Gastrocnemius medialis (tissue), 4 donors: ENCODE measurements at regions of chr5 and their contacts with region 1.

Region 1: GRCh38 chr5:62354028-62354874 is 48.2 kb downstream of the KIF2A start:
- DNase-seq: no peak
- ATAC-seq: peak; percentile 56 to 86
- H3K4me3 ChIP-seq: no peak overlapping the region
- H3K27ac ChIP-seq: no peak overlapping the region
- H3K4me1 ChIP-seq: peaks cover 0 to 3% of the 10 kb centered on the region in 2 donors
- H3K27me3 ChIP-seq: no peaks in the 10 kb centered on the region
- CTCF ChIP-seq: peak in 4 of 5 experiments; percentile 57 to 70 (median 64)
- POLR2A ChIP-seq: no peak

Region 2: GRCh38 chr5:61496860-61497259 is 857.4 kb before region 1 on chr5:
- in situ Hi-C with region 1: no loop called
- intact Hi-C with region 1: no loop called
- DNase-seq: no peak
- ATAC-seq: no peak
- H3K4me3 ChIP-seq: no peak overlapping the region
- H3K27ac ChIP-seq: no peak overlapping the region
- H3K4me1 ChIP-seq: no peaks in the 10 kb centered on the region
- H3K27me3 ChIP-seq: no peaks in the 10 kb centered on the region
- CTCF ChIP-seq: no peak
- POLR2A ChIP-seq: no peak

Region 3: DNA sequence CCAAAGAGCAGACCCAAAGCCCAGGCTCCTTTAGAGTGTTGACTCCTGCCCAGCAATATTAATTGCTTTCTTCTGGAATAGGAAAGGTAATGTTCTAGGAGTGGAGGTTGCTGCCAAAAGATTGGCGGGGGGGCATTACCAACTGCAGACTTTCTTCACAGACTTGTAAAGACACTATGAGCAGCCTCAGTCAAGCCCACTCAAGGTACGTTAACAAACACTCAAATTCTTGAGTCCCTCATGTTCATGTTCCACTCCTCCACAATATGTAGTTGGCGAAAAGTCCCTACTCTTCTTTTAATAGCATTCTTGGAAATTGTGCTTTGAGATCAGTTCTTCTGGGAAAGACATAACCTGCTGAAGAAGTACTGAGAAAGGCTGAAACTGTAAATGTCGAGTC is 457.4 kb before region 1 on chr5:
- in situ Hi-C with region 1: no loop called
- intact Hi-C with region 1: no loop called
- DNase-seq: no peak
- ATAC-seq: no peak
- H3K4me3 ChIP-seq: no peak overlapping the region
- H3K27ac ChIP-seq: no peak overlapping the region
- H3K4me1 ChIP-seq: no peaks in the 10 kb centered on the region
- H3K27me3 ChIP-seq: no peaks in the 10 kb centered on the region
- CTCF ChIP-seq: no peak
- POLR2A ChIP-seq: no peak

Region 4: GRCh38 chr5:62214701-62215100 is 139.6 kb before region 1 on chr5:
- in situ Hi-C with region 1: loop called in 3 of 4 experiments (anchors 10 kb)
- intact Hi-C with region 1: no loop called
- DNase-seq: no peak
- ATAC-seq: no peak
- H3K4me3 ChIP-seq: no peak overlapping the region
- H3K27ac ChIP-seq: no peak overlapping the region
- H3K4me1 ChIP-seq: no peaks in the 10 kb centered on the region
- H3K27me3 ChIP-seq: no peaks in the 10 kb centered on the region
- CTCF ChIP-seq: no peak
- POLR2A ChIP-seq: no peak

Region 5: DNA sequence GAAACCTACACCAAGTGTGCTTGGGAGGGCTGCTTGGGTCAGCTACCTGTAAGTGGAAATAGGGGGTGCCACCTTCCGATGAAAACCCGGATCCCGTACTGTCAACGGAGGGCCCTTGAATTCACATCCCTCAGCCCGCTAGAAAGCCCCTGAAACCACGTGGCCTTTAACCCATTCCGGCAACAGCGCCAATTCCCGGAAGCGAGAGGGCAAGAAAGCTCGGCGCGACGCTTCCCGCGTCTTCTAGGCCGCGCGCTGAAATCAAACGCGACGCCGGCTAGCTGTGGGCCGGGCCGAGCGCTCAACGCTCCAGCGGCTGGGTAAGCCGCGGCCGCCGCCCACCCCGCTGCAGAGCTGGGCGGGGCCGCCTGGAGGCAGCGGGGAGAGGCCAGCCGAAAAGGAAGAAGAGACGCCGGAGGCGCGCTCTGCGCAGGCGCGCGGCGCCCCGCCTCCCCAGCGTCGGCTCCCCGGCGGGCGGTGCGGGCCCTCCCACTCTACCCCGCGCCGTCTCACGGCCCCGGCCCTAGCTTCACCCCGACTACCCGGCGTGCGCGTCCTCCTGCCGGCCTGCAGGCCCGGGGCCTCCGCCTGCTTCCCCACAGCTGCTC is 48.4 kb before region 1 on chr5 and contains the start of gene KIF2A:
- in situ Hi-C with region 1: no loop called
- intact Hi-C with region 1: loop called (anchors 2 kb)
- DNase-seq: peak; percentile 68 to 84
- ATAC-seq: peak; percentile 93 to 94
- H3K4me3 ChIP-seq: peak within 1 kb of the TSS; percentile 84 to 98 (median 92)
- H3K27ac ChIP-seq: peak within 1 kb of the TSS; percentile 73 to 93 (median 89)
- H3K4me1 ChIP-seq: peaks cover 11 to 12% of the 10 kb centered on the region in 2 donors
- H3K27me3 ChIP-seq: no peaks in the 10 kb centered on the region
- CTCF ChIP-seq: peak in 2 of 5 experiments; percentile 27 to 44
- POLR2A ChIP-seq: peak; percentile 36 to 53
- total RNA-seq, gene KIF2A: 7.5 to 14.2 (median 11.8) TPM